Tibial artery (tissue), 4 donors: ENCODE measurements at regions of chr4 and their contacts with region 1.

Region 1: GRCh38 chr4:140252742-140253555 is 99.0 kb upstream of the MAML3 start:
- DNase-seq: peak; percentile 45 to 82
- H3K4me3 ChIP-seq: peak overlapping the region; percentile 71 to 73
- H3K27ac ChIP-seq: peak overlapping the region; percentile 85 to 89
- H3K4me1 ChIP-seq: peaks cover 0 to 20% (median 11%) of the 10 kb centered on the region in 4 donors
- H3K27me3 ChIP-seq: no peaks in the 10 kb centered on the region
- CTCF ChIP-seq: peak; percentile 81 to 97

Region 2: GRCh38 chr4:139651282-139652194 is 601.4 kb before region 1 on chr4:
- intact Hi-C with region 1: loop called (anchors 10 kb)
- DNase-seq: peak; percentile 74 to 87
- H3K4me3 ChIP-seq: peak overlapping the region in 1 of 2 donors; percentile 31
- H3K27ac ChIP-seq: no peak overlapping the region
- H3K4me1 ChIP-seq: no peaks in the 10 kb centered on the region
- H3K27me3 ChIP-seq: no peaks in the 10 kb centered on the region
- CTCF ChIP-seq: peak; percentile 92 to 93

Region 3: GRCh38 chr4:139734875-139735380 is 518.0 kb before region 1 on chr4:
- intact Hi-C with region 1: loop called (anchors 5 kb)
- DNase-seq: peak; percentile 84 to 94
- H3K4me3 ChIP-seq: peak overlapping the region; percentile 58 to 72
- H3K27ac ChIP-seq: peak overlapping the region; percentile 84 to 91
- H3K4me1 ChIP-seq: peaks cover 0 to 31% (median 20%) of the 10 kb centered on the region in 4 donors
- H3K27me3 ChIP-seq: no peaks in the 10 kb centered on the region
- CTCF ChIP-seq: peak; percentile 82 to 92

Region 4: GRCh38 chr4:140012688-140013486 is 240.1 kb before region 1 on chr4:
- intact Hi-C with region 1: loop called (anchors 10 kb)
- DNase-seq: peak in 1 of 2 donors; percentile 58
- H3K4me3 ChIP-seq: no peak overlapping the region
- H3K27ac ChIP-seq: peak overlapping the region in 1 of 2 donors; percentile 1
- H3K4me1 ChIP-seq: peaks cover 0 to 11% (median 3%) of the 10 kb centered on the region in 4 donors
- H3K27me3 ChIP-seq: no peaks in the 10 kb centered on the region
- CTCF ChIP-seq: peak; percentile 42 to 57

Region 5: DNA sequence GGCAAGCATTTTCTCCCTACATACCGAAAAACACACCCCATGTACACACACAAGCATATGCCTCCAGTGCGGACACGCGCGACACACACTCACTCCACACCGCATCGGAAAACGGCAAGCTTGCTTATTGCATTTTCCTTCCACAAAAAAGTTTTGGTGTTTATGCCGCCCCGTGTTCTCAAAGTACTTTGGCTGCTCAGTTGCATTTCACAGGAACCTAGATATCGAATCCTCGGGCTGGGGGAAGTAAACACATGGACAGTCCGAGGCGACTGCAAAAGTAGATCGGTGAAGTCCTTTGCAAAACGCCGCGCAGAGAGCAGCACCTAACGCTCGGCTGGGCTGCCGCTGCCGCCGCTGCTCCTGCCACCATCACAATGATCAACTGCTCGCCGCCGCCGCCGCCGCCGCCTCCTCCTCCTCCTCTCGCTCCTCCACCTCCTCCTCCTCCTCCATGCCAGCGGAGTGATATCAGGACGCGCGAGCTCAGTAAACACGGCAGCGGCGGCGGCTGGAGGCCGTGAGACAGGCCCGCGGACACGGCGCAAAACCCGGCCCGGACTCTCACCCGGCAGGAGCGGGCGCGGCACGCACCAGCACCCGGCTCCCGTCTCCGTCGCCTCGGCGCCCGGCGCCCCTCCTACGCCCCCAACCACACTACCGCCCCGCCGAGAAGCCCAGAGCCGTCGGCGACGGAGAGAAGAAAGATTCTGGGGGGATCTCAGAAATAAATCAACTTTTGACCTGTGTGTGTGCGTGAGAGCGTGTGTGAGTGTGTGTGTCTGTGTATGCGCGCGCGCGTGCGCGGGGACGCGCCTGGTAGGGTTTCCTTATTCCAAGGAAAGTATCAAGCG is 99.0 kb before region 1 on chr4 and contains the start of gene MAML3:
- intact Hi-C with region 1: loop called (anchors 2 kb)
- DNase-seq: peak; percentile 95 to 97
- H3K4me3 ChIP-seq: peak within 1 kb of the TSS; percentile 76 to 91
- H3K27ac ChIP-seq: peak within 1 kb of the TSS; percentile 96
- H3K4me1 ChIP-seq: peaks cover 0 to 20% (median 12%) of the 10 kb centered on the region in 4 donors
- H3K27me3 ChIP-seq: no peaks in the 10 kb centered on the region
- CTCF ChIP-seq: peak in 1 of 2 experiments; percentile 19

Region 6: GRCh38 chr4:140326395-140326993 is 73.5 kb after region 1 on chr4:
- intact Hi-C with region 1: loop called (anchors 10 kb)
- DNase-seq: no peak
- H3K4me3 ChIP-seq: no peak overlapping the region
- H3K27ac ChIP-seq: no peak overlapping the region
- H3K4me1 ChIP-seq: no peaks in the 10 kb centered on the region
- H3K27me3 ChIP-seq: no peaks in the 10 kb centered on the region
- CTCF ChIP-seq: peak; percentile 65 to 67